ENCODE measurements at regions of chr10 and their contacts with region 1.

Region 1: DNA sequence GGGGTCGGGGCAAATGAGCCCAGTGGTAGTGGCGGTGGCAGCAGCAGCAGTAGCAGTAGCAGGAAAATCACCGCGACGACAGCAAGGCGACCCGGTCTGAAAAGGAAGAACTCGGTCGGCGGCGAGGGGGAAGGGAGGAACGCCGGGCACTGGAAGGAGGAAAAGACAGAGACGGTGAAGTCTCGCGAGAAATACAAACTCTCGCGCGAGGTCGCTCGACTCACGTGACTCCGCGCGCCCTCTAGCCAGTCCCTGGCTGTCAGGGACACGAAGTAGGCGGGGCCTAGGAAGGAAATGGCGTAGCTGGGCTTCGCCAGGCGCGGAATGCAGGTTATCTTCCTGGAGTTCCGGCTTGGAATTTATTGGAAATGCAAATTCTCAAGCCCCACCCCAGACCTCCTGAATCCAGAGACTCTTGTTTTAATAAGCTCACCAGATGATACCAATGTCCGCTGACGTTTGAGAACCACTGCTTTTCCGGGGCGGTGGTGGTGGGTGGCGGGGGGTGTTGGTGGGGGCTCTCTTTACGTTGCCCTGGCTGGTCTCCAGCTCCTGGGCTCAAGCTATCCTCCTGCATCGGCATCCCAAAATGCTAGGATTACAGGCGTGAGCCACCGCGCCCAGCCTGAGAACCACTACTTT is at the start of gene SMNDC1:
- DNase-seq: peak; percentile 97 to 99 (median 99)
- H3K4me3 ChIP-seq: peak within 1 kb of the TSS; percentile 96
- H3K27ac ChIP-seq: peak within 1 kb of the TSS; percentile 66 to 84
- H3K4me1 ChIP-seq: no peaks in the 10 kb centered on the region
- H3K27me3 ChIP-seq: no peaks in the 10 kb centered on the region
- CTCF ChIP-seq: no peak
- EP300 ChIP-seq: peak; percentile 11
- POLR2A ChIP-seq: peak; percentile 56
- total RNA-seq, gene SMNDC1: 11.7 to 31.9 (median 28.2) TPM

Region 2: GRCh38 chr10:110556969-110557601 is 252.2 kb after region 1 on chr10:
- intact Hi-C with region 1: loop called in 1 of 4 experiments (anchors 5 kb)
- DNase-seq: peak in 2 of 5 donors; percentile 29 to 38
- H3K4me3 ChIP-seq: no peak overlapping the region
- H3K27ac ChIP-seq: no peak overlapping the region
- H3K4me1 ChIP-seq: no peaks in the 10 kb centered on the region
- H3K27me3 ChIP-seq: no peaks in the 10 kb centered on the region
- CTCF ChIP-seq: peak in 1 of 3 donors; percentile 17
- EP300 ChIP-seq: no peak
- POLR2A ChIP-seq: no peak

Measured in ovary (tissue), 10 donors.